Common myeloid progenitor, CD34-positive (primary cell): ENCODE measurements at regions of chr22 and their contacts with region 1.

Region 1: DNA sequence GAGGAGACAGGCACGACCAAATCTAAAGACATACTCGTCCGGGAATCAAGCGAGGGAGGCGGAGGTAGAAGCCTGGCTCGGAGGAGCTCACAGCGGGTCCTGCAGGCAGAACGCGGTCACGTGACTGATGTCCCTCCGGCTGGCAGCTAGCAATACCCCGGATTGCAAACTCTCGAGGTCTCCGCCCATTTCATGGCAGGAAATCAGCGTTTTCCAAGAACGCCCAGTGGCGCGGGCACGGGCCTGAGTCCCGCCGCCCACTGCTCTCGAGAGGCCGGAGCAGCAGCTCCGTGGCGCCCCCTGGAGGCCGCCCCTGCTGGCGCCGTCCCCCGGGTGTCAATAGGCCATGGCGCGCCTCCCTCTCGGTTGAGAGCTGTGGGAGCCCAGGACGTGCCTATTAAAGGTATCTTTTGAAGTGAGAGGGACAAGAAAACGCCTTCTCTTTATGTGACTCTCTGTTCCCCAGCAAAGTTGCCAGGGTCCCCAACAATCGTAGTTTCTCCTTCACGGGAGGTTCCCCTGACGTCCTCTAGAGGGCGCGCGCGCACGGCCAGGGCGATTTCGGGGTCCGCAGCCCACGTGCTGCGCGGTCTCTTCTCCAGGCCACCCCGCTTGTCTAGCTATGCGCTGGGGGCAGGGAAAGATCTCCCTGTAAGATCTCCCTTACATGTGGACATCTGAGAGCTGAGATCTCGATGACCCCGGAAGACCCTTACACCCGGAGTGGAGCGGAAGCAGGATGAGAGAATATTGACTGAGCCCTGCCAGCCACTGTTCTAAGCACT is 37.3 kb upstream of the RBFOX2 start:
- DNase-seq: peak; percentile 66 to 74 (median 71)
- H3K4me3 ChIP-seq: peak overlapping the region; percentile 54 to 84 (median 66)
- H3K27ac ChIP-seq: peak overlapping the region in 1 of 2 experiments; percentile 65
- H3K4me1 ChIP-seq: peaks cover 0 to 13% (median 8%) of the 10 kb centered on the region in 4 experiments
- H3K27me3 ChIP-seq: peaks cover 0 to 6% (median 1%) of the 10 kb centered on the region in 5 experiments

Region 2: GRCh38 chr22:35921777-35922176 is 144.2 kb before region 1 on chr22:
- CTCF ChIA-PET with region 1: interaction called, 13 read pairs
- POLR2A ChIA-PET with region 1: no interaction called
- DNase-seq: peak; percentile 74 to 77 (median 77)
- H3K4me3 ChIP-seq: no peak overlapping the region
- H3K27ac ChIP-seq: no peak overlapping the region
- H3K4me1 ChIP-seq: peaks cover 0 to 3% (median 2%) of the 10 kb centered on the region in 4 experiments
- H3K27me3 ChIP-seq: no peaks in the 10 kb centered on the region

Region 3: GRCh38 chr22:35944458-35944857 is 121.5 kb before region 1 on chr22:
- CTCF ChIA-PET with region 1: interaction called, 10 read pairs
- POLR2A ChIA-PET with region 1: no interaction called
- DNase-seq: no peak
- H3K4me3 ChIP-seq: no peak overlapping the region
- H3K27ac ChIP-seq: no peak overlapping the region
- H3K4me1 ChIP-seq: no peaks in the 10 kb centered on the region
- H3K27me3 ChIP-seq: no peaks in the 10 kb centered on the region

Region 4: GRCh38 chr22:36027935-36028645 is 37.9 kb before region 1 on chr22:
- CTCF ChIA-PET with region 1: interaction called, 14 read pairs
- POLR2A ChIA-PET with region 1: no interaction called
- DNase-seq: peak in 1 of 3 donors; percentile 8
- H3K4me3 ChIP-seq: peak overlapping the region; percentile 59 to 89 (median 72)
- H3K27ac ChIP-seq: no peak overlapping the region
- H3K4me1 ChIP-seq: peaks cover 5 to 19% (median 13%) of the 10 kb centered on the region in 4 experiments
- H3K27me3 ChIP-seq: peaks cover 0 to 2% (median 0%) of the 10 kb centered on the region in 5 experiments

Region 5: DNA sequence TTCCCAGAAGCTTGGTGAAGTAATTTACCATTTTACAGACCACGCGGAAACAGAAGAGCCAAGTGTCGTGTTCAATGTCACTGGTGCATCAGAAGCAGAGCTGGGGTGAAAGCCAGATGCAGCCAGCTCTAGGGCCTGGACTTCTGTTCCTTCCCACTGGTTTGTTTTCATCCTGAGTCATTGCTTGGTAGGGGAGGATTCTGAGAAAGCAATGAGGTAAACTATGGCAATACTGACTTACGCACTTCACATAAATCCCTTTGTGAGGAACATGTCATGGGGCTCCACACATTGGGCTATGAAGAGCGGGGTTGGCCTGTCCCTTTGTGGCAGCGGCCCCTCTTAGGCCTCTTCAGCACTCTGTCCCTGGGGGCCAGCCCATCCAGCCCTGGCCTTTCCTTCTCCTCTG is 15.1 kb after region 1 on chr22:
- CTCF ChIA-PET with region 1: interaction called, 18 read pairs
- POLR2A ChIA-PET with region 1: no interaction called
- DNase-seq: no peak
- H3K4me3 ChIP-seq: no peak overlapping the region
- H3K27ac ChIP-seq: no peak overlapping the region
- H3K4me1 ChIP-seq: no peaks in the 10 kb centered on the region
- H3K27me3 ChIP-seq: peaks cover 0 to 17% (median 3%) of the 10 kb centered on the region in 5 experiments

Region 6: DNA sequence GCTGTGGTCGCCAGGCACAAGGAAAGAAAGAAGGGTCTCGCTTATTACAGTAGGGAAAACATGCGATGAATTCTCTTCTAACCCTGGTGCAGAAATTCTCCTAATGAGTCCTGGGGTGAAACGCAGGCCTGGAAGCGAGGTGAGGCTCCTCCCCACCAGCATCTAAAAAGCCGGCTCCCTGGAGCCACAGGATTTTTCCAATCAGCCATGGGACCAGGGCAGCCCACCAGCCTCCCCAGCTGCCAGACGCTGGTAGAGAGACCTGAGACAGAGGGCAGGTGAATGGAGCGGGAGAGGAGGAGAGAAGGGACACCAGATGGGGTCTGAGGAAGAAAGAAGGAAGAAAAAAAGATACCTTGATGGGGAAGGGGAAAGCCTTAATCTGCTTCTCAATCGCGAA is 65.9 kb after region 1 on chr22:
- CTCF ChIA-PET with region 1: no interaction called
- POLR2A ChIA-PET with region 1: no interaction called
- DNase-seq: no peak
- H3K4me3 ChIP-seq: no peak overlapping the region
- H3K27ac ChIP-seq: no peak overlapping the region
- H3K4me1 ChIP-seq: peaks cover 0 to 8% (median 3%) of the 10 kb centered on the region in 4 experiments
- H3K27me3 ChIP-seq: peaks cover 0 to 3% (median 2%) of the 10 kb centered on the region in 5 experiments

Region 7: GRCh38 chr22:36562261-36562835 is 496.4 kb after region 1 on chr22:
- CTCF ChIA-PET with region 1: no interaction called
- POLR2A ChIA-PET with region 1: no interaction called
- DNase-seq: no peak
- H3K4me3 ChIP-seq: no peak overlapping the region
- H3K27ac ChIP-seq: no peak overlapping the region
- H3K4me1 ChIP-seq: peaks cover 0 to 3% (median 2%) of the 10 kb centered on the region in 4 experiments
- H3K27me3 ChIP-seq: peaks cover 0 to 44% (median 8%) of the 10 kb centered on the region in 5 experiments